Vagina (tissue), 2 donors: ENCODE measurements at regions of chr12 and their contacts with region 1.

Region 1: DNA sequence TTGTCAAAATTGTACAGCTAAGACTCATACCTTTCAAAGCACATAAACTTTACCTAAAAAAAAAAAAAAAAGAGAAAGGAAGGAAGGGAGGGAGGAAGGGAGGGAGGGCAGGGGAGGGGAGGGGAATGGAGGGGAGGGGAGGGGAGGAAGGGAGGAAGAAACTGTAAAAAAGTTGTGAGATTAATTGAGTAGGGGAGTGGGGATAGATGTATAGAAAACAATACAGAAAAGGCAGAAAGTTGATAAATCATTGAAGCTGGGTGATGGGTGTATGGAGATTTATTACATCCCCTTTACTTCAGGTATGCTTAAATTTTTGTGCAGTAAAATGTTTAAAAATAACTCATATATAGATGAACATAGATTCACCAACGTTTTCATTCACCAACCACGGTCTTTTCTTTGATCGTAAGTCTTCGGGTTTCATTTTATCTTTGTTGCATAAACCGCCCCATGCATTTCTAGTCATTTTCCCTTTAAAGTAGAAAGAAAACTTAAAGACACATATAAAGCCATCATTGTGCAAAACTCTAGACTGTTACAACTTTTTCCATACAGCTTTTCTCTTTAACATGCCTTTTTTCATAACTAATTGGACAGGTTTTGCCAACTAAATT is 191.2 kb upstream of the KRR1 start:
- DNase-seq: no peak
- H3K4me3 ChIP-seq: no peak overlapping the region
- H3K27ac ChIP-seq: no peak overlapping the region
- H3K4me1 ChIP-seq: peaks cover 14% of the 10 kb centered on the region
- H3K27me3 ChIP-seq: no peaks in the 10 kb centered on the region
- CTCF ChIP-seq: no peak
- POLR2A ChIP-seq: no peak

Region 2: GRCh38 chr12:75685602-75686225 is 16.9 kb before region 1 on chr12:
- intact Hi-C with region 1: loop called (anchors 2 kb)
- DNase-seq: no peak
- H3K4me3 ChIP-seq: no peak overlapping the region
- H3K27ac ChIP-seq: peak overlapping the region; percentile 62
- H3K4me1 ChIP-seq: peaks cover 16% of the 10 kb centered on the region
- H3K27me3 ChIP-seq: no peaks in the 10 kb centered on the region
- CTCF ChIP-seq: no peak
- POLR2A ChIP-seq: no peak

Region 3: DNA sequence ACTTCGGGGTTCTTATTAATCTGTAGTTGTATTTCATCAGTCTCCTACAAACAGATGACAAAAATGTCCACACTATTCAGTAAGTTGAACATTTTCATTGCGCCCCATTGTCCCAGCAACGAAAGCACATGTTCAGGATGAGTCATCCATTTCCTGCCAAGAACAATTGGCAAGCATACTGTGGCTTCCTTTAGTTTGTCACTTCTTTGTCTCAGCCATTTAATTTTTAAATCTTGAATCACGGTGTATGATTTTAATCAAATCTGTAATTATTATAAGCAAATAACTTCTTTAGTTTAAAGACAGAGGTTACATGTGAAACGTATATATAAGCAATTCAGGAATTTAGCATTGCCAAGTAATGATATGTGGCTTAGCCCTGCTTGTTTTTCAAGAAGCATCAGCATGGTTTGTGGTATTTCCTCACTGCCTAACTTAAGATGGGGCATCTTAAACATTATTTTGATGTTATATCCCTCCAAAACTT is 20.2 kb after region 1 on chr12:
- intact Hi-C with region 1: no loop called
- DNase-seq: no peak
- H3K4me3 ChIP-seq: no peak overlapping the region
- H3K27ac ChIP-seq: peak overlapping the region; percentile 66
- H3K4me1 ChIP-seq: peaks cover 52% of the 10 kb centered on the region
- H3K27me3 ChIP-seq: no peaks in the 10 kb centered on the region
- CTCF ChIP-seq: no peak
- POLR2A ChIP-seq: no peak